K562 (cell line): ENCODE measurements at regions of chr5 and their contacts with region 1.

Region 1: DNA sequence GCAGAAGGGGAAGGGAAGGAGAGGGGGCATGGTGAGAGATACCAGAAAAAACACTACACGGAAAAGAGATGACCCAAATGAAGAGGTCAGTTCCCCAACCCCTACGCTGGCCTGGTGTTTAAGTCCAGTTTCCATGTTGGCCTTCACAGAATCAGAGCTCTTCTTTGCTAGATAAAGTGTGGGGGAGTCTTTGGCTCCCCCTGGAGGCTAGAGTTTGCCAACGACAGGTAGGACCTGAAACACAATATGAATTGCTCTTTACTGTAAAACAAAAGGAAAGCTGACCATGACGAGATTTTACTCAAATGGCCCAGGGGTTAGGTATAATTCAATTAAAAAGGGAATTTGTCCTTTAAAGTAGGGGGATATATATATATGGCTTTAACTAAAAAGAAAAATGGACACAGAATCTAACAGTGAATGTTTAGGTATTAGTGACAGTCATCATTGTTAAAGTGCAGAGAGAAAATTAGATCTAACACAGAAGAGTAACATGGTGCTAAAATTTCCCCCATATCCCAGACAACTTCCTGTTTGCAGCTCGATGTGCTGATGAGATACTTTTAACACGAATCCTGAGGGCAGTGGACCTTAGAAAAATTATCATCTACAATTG is 92.0 kb downstream of the SV2C start:
- DNase-seq: peak; percentile 68 to 78 (median 70)
- ATAC-seq: peak; percentile 83
- H3K4me3 ChIP-seq: no peak overlapping the region
- H3K27ac ChIP-seq: no peak overlapping the region
- H3K4me1 ChIP-seq: peaks cover 16 to 28% of the 10 kb centered on the region in 2 experiments
- H3K27me3 ChIP-seq: no peaks in the 10 kb centered on the region
- CTCF ChIP-seq: peak; percentile 70 to 89 (median 76)
- EP300 ChIP-seq: no peak
- POLR2A ChIP-seq: no peak
- RAD21 ChIP-seq: peak; percentile 52 to 70

Region 2: DNA sequence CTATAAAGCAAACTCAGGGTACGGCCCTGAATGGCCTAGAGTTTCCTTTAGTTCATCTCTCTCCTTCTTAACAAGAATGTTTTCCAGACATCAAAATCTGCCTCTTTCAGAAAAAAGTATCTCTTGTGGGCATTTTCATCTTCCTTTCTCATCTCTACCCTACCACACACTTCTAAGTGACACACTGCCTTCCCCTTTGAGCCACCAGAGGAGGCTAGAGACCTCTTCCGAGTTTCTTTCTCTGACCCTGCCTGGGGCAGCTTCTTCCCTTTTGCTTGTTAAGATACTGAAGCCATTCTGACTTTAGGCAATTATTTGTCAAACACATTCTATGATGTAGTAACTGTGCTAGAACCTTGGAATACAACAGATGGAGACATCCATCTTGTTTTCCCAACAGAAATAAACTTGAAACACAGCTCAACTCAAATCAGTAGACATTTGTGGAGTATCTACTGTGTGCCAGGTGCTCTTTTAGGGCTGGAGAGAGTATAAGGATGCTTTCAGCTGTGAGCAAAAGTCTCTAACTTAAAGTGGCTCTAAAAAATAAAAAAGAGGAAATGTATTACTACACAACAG is 100.6 kb before region 1 on chr5:
- CTCF ChIA-PET with region 1: no interaction called
- POLR2A ChIA-PET with region 1: no interaction called
- in situ Hi-C with region 1: no loop called
- intact Hi-C with region 1: loop called (anchors 5 kb)
- DNase-seq: peak in 2 of 4 experiments; percentile 24 to 29
- ATAC-seq: peak; percentile 73; the same call in 2 of the 3 replicates
- H3K4me3 ChIP-seq: no peak overlapping the region
- H3K27ac ChIP-seq: no peak overlapping the region
- H3K4me1 ChIP-seq: no peaks in the 10 kb centered on the region
- H3K27me3 ChIP-seq: peaks cover 0 to 4% of the 10 kb centered on the region in 2 experiments; a peak in 1 of 5 replicates
- CTCF ChIP-seq: peak; percentile 52 to 67 (median 62)
- EP300 ChIP-seq: no peak
- POLR2A ChIP-seq: no peak
- RAD21 ChIP-seq: peak; percentile 74 to 75

Region 3: DNA sequence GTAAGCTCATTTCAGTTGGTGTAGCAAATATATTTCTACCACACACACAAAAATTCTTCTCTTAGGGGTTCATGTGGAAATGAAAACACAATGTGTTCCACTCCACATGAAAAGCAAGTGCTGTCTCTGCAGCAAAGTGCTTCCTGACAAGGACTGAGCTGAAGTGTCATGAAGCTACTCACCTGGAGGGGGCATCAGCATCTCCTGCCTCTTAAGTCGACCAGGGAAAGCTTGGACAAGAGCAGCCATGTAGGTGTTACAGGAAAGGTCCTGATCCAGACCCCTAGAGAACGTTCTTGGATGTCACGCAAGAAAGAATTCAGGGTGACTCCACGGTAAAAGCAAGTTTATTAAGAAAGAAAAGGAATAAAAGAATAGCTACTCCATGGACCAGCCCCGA is 29.2 kb before region 1 on chr5:
- CTCF ChIA-PET with region 1: no interaction called
- POLR2A ChIA-PET with region 1: no interaction called
- in situ Hi-C with region 1: no loop called
- intact Hi-C with region 1: loop called (anchors 2 kb)
- DNase-seq: peak; percentile 15 to 54 (median 32)
- ATAC-seq: peak; percentile 93
- H3K4me3 ChIP-seq: no peak overlapping the region
- H3K27ac ChIP-seq: no peak overlapping the region
- H3K4me1 ChIP-seq: no peaks in the 10 kb centered on the region
- H3K27me3 ChIP-seq: no peaks in the 10 kb centered on the region
- CTCF ChIP-seq: peak; percentile 58 to 67 (median 64)
- EP300 ChIP-seq: no peak
- POLR2A ChIP-seq: no peak
- RAD21 ChIP-seq: peak; percentile 47 to 67